ENCODE measurements at regions of chr21 and their contacts with region 1.

Region 1: GRCh38 chr21:17925000-17925610 is 105.9 kb upstream of the C21orf91 start:
- DNase-seq: no peak
- H3K4me3 ChIP-seq: no peak overlapping the region
- H3K27ac ChIP-seq: no peak overlapping the region
- H3K4me1 ChIP-seq: peaks cover 0 to 17% (median 12%) of the 10 kb centered on the region in 4 donors
- H3K27me3 ChIP-seq: no peaks in the 10 kb centered on the region
- CTCF ChIP-seq: peak; percentile 36 to 83 (median 62)
- EP300 ChIP-seq: no peak
- POLR2A ChIP-seq: no peak

Region 2: DNA sequence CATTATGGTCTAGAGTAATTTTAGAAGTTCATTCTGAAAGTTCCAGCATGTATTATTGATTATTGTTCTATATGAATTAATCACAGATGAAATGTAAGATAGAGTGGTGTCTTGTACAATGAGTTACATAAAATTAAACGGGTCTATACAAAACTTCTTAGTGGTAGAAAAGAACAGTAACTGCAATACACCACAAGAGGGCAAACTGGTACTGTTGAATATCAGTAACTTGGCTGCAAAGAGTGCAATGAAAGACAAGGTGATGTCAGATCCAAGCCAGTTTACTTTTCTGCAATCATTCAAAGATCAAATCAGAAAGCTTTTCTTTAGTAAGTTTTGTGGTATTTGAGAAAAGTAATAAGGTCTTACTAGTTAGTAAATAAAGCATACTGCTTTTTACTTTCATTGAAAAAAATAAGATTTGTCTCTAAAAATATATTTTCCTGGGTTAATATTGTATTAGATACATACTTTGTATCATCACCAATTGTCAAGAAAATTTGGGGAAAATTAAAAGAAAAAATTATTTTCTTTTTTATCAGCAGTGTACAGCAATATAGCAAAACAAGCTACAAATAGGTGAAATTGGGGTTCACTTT is 246.0 kb before region 1 on chr21:
- intact Hi-C with region 1: loop called (anchors 1 kb)
- DNase-seq: no peak
- H3K4me3 ChIP-seq: no peak overlapping the region
- H3K27ac ChIP-seq: no peak overlapping the region
- H3K4me1 ChIP-seq: no peaks in the 10 kb centered on the region
- H3K27me3 ChIP-seq: no peaks in the 10 kb centered on the region
- CTCF ChIP-seq: peak; percentile 56 to 75 (median 70)
- EP300 ChIP-seq: no peak
- POLR2A ChIP-seq: no peak

Region 3: GRCh38 chr21:17793246-17794123 is 131.6 kb before region 1 on chr21:
- intact Hi-C with region 1: loop called (anchors 10 kb)
- DNase-seq: no peak
- H3K4me3 ChIP-seq: peak overlapping the region; percentile 5 to 43 (median 35)
- H3K27ac ChIP-seq: peak overlapping the region; percentile 31 to 67 (median 56)
- H3K4me1 ChIP-seq: peaks cover 0 to 22% (median 9%) of the 10 kb centered on the region in 4 donors
- H3K27me3 ChIP-seq: no peaks in the 10 kb centered on the region
- CTCF ChIP-seq: no peak
- EP300 ChIP-seq: no peak
- POLR2A ChIP-seq: no peak